HEK293 (cell line): ENCODE measurements at regions of chr17 and their contacts with region 1.

Region 1: GRCh38 chr17:49434821-49435670 is 20.4 kb upstream of the PHB1 start:
- H3K4me3 ChIP-seq: no peak overlapping the region
- H3K27ac ChIP-seq: no peak overlapping the region
- H3K4me1 ChIP-seq: no peaks in the 10 kb centered on the region
- CTCF ChIP-seq: peak; percentile 39; the same call in 1 of the 2 replicates

Region 2: DNA sequence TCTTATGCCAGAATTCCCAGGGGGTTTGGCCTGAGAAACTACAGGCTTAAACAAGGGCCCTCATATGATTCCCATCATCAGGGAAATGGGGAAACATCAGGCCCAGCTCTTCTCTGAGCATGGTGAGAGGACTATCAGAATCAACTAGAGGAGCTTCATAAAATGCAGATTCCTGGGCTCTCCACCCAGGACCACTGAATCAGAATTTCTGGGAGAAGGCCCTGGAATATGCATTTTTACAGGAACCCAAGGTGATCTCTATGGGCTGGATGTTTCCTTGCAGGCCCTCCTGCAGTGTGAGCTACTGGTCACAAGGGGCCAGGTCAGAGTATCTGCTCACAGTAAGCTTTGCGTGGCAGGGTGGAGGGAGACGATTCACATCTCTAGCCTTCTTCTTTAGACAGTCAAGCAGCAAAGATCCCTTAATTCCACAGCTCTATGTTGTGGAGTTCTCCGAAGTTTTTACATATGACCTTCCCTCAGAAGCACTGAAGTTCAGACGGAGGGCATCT is 667.7 kb before region 1 on chr17:
- CTCF ChIA-PET with region 1: no interaction called
- POLR2A ChIA-PET with region 1: no interaction called
- H3K4me3 ChIP-seq: no peak overlapping the region
- H3K27ac ChIP-seq: no peak overlapping the region
- H3K4me1 ChIP-seq: no peaks in the 10 kb centered on the region
- CTCF ChIP-seq: no peak

Region 3: DNA sequence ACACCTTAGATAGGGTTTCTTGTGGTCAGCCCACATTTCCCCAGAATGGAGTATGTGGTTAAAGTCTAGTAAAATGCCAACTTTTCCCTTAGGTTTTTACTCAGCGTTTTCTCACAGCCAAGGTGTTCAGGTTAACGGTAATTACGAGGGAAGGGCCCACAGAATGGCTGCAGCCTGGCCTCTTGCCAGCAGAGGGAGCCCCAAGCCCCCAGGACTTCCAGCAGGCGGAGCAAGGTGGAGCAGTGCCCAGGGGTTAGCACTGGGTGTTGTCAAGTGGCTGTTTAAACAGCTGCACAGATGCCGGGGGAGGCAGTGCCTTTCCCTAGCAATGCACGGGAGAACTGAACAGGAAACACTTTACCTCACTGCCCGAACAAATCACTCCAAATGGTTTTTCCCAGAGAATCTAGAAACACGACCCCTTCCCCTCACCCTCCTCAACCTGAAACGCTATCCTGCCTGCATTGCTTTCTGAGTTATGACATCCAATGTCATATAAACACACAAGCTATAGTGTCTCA is 27.0 kb before region 1 on chr17:
- CTCF ChIA-PET with region 1: interaction called, 37 read pairs
- POLR2A ChIA-PET with region 1: no interaction called
- H3K4me3 ChIP-seq: no peak overlapping the region
- H3K27ac ChIP-seq: no peak overlapping the region
- H3K4me1 ChIP-seq: no peaks in the 10 kb centered on the region; the same call in 1 of the 2 replicates
- CTCF ChIP-seq: peak; percentile 99

Region 4: DNA sequence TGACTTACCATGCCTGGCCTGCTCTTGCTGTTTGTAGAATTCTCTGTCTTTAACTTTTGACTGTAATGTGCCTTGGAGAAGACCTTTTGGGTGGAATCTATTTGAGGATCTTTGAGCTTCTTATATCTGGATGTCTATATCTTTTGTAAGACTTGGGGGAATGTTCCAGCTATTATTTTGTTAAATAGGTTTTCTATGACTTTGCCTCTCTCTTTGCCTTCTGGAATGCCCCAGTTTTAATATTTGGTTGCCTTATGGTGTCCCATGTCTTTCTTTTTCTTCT is 10.1 kb before region 1 on chr17:
- CTCF ChIA-PET with region 1: interaction called, 53 read pairs
- POLR2A ChIA-PET with region 1: no interaction called
- H3K4me3 ChIP-seq: no peak overlapping the region
- H3K27ac ChIP-seq: no peak overlapping the region
- H3K4me1 ChIP-seq: no peaks in the 10 kb centered on the region
- CTCF ChIP-seq: no peak

Region 5: DNA sequence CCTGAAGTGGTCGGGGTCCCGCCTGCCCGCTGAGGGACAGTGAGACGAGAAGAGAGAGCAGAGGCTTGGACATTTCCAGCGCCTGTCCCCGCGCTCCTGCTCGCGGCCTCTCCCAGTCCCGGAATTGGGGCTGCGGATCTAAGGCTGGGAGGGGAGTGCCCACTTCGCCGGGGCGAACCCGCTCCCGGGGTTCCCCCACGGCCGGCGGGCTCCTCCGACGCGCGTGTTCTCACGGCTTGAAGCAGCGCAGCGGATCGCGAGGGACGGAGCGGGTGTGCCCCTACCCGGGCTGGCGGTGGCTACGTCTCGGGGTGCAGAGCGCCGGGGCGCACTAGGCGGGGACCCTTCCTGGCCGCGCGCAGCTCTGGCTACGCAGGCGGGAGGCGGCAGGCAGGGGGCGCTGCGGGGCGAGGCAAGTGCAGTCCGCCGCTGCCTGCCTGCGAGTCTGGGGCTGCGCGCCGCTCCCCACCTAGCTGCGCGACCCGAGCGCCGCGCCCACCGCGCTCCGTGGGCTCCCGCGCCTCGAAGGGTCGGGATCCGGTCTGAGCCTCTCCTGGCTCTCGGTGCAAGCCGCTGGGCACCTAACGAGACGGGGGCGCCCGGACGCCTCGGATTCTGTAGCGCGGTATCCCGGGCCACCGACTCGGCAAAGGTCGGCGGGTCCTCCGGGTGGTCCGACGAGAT is 61.3 kb after region 1 on chr17:
- CTCF ChIA-PET with region 1: interaction called, 18 read pairs
- POLR2A ChIA-PET with region 1: interaction called, 3 read pairs
- H3K4me3 ChIP-seq: peak overlapping the region; percentile 51
- H3K27ac ChIP-seq: peak overlapping the region; percentile 27; the same call in 1 of the 2 replicates
- H3K4me1 ChIP-seq: peaks cover 13% of the 10 kb centered on the region
- CTCF ChIP-seq: peak; percentile 85

Region 6: GRCh38 chr17:49548506-49549310 is 113.7 kb after region 1 on chr17:
- CTCF ChIA-PET with region 1: interaction called, 303 read pairs
- POLR2A ChIA-PET with region 1: interaction called, 3 read pairs
- H3K4me3 ChIP-seq: no peak overlapping the region
- H3K27ac ChIP-seq: no peak overlapping the region
- H3K4me1 ChIP-seq: no peaks in the 10 kb centered on the region
- CTCF ChIP-seq: peak; percentile 66